ENCODE measurements at regions of chr12 and their contacts with region 1.

Region 1: GRCh38 chr12:64610149-64610678 is at the start of gene RASSF3:
- DNase-seq: peak; percentile 39 to 90 (median 78)
- ATAC-seq: peak; percentile 62
- H3K4me3 ChIP-seq: peak within 1 kb of the TSS; percentile 96
- H3K4me3 Mint-ChIP-seq: peak within 1 kb of the TSS; percentile 90
- H3K27ac ChIP-seq: peak within 1 kb of the TSS; percentile 58 to 82
- H3K27ac Mint-ChIP-seq: peak within 1 kb of the TSS; percentile 96
- H3K4me1 ChIP-seq: peaks cover 21% of the 10 kb centered on the region
- H3K4me1 Mint-ChIP-seq: peaks cover 34% of the 10 kb centered on the region
- H3K27me3 ChIP-seq: no peaks in the 10 kb centered on the region
- H3K27me3 Mint-ChIP-seq: no peaks in the 10 kb centered on the region
- CTCF ChIP-seq: no peak
- total RNA-seq, gene RASSF3: 109 to 118 TPM

Region 2: DNA sequence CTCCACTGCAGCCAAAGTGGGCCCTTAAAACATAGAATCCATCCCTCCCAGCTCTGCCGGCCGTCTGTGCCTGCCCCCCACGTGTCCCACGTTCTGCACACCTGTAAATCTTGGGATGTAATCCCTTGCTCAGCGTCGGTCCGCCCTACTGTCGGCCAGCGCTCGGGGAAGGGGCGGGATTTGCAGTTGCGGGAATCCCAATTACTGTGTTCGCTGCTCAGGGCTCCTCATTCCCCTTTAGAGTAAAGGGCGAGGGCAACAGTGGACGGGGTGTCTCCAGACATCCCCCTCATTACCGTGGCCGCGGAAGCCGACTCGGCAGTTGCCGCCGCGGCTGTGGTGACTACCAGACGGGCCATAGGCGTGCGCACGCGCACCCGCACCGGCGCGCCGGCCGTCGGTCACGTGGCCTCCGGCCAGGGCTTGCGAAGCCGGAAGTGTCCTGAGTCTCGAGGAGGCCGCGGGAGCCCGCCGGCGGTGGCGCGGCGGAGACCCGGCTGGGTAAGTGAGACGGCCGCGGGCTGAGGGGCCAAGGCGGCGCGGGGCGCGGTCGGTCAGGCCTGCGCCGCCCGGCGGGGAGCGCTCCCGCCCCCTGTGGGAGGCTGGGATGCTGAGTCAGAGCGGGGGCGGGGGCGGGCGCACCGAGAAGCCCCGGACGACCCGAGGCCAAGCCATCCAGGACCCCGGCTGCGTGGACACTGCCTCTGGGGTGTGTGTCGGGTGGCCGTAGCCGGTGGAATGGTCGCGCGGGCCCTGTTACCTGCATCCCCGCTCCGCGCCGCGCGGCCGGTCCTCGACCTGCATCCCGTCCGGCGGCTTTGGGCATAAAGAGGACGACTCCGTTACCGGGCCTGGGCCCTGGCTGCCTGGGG is 158.3 kb before region 1 on chr12 and contains the start of gene TBK1:
- CTCF ChIA-PET with region 1: no interaction called
- POLR2A ChIA-PET with region 1: no interaction called
- intact Hi-C with region 1: loop called in 1 of 2 experiments (anchors 5 kb)
- DNase-seq: peak; percentile 8 to 76 (median 51)
- ATAC-seq: peak; percentile 64
- H3K4me3 ChIP-seq: peak within 1 kb of the TSS; percentile 88 to 99
- H3K4me3 Mint-ChIP-seq: peak within 1 kb of the TSS; percentile 89
- H3K27ac ChIP-seq: peak within 1 kb of the TSS; percentile 76 to 93
- H3K27ac Mint-ChIP-seq: peak within 1 kb of the TSS; percentile 90
- H3K4me1 ChIP-seq: peaks cover 8% of the 10 kb centered on the region
- H3K4me1 Mint-ChIP-seq: peaks cover 40% of the 10 kb centered on the region
- H3K27me3 ChIP-seq: no peaks in the 10 kb centered on the region
- H3K27me3 Mint-ChIP-seq: no peaks in the 10 kb centered on the region
- CTCF ChIP-seq: no peak
- total RNA-seq, gene TBK1: 6.2 to 6.7 TPM

Region 3: GRCh38 chr12:64625243-64626077 is 15.2 kb after region 1 on chr12:
- CTCF ChIA-PET with region 1: interaction called, 4 read pairs
- POLR2A ChIA-PET with region 1: interaction called, 3 read pairs
- intact Hi-C with region 1: loop called (anchors 2 kb)
- DNase-seq: peak in 5 of 9 experiments; percentile 22 to 67 (median 44)
- ATAC-seq: peak; percentile 58
- H3K4me3 ChIP-seq: peak overlapping the region; percentile 19 to 25
- H3K4me3 Mint-ChIP-seq: peak overlapping the region; percentile 82
- H3K27ac ChIP-seq: peak overlapping the region in 1 of 2 experiments; percentile 48
- H3K27ac Mint-ChIP-seq: peak overlapping the region; percentile 84
- H3K4me1 ChIP-seq: peaks cover 73% of the 10 kb centered on the region
- H3K4me1 Mint-ChIP-seq: peaks cover 80% of the 10 kb centered on the region
- H3K27me3 ChIP-seq: no peaks in the 10 kb centered on the region
- H3K27me3 Mint-ChIP-seq: no peaks in the 10 kb centered on the region
- CTCF ChIP-seq: no peak

Region 4: GRCh38 chr12:64669270-64669842 is 59.1 kb after region 1 on chr12:
- CTCF ChIA-PET with region 1: interaction called, 7 read pairs
- POLR2A ChIA-PET with region 1: interaction called, 56 read pairs
- intact Hi-C with region 1: loop called (anchors 2 to 5 kb)
- DNase-seq: peak; percentile 18 to 94 (median 57)
- ATAC-seq: peak; percentile 79
- H3K4me3 ChIP-seq: peak overlapping the region; percentile 51 to 57
- H3K4me3 Mint-ChIP-seq: peak overlapping the region; percentile 87
- H3K27ac ChIP-seq: peak overlapping the region; percentile 77 to 94
- H3K27ac Mint-ChIP-seq: peak overlapping the region; percentile 98
- H3K4me1 ChIP-seq: peaks cover 92% of the 10 kb centered on the region
- H3K4me1 Mint-ChIP-seq: peaks cover 90% of the 10 kb centered on the region
- H3K27me3 ChIP-seq: no peaks in the 10 kb centered on the region
- H3K27me3 Mint-ChIP-seq: no peaks in the 10 kb centered on the region
- CTCF ChIP-seq: no peak

Region 5: GRCh38 chr12:64696080-64696741 is 86.0 kb after region 1 on chr12:
- CTCF ChIA-PET with region 1: interaction called, 27 read pairs
- POLR2A ChIA-PET with region 1: interaction called, 17 read pairs
- intact Hi-C with region 1: loop called (anchors 1 to 2 kb)
- DNase-seq: peak in 1 of 9 experiments; percentile 55
- ATAC-seq: no peak
- H3K4me3 ChIP-seq: no peak overlapping the region
- H3K4me3 Mint-ChIP-seq: peak overlapping the region; percentile 56
- H3K27ac ChIP-seq: peak overlapping the region in 1 of 2 experiments; percentile 36
- H3K27ac Mint-ChIP-seq: peak overlapping the region; percentile 91
- H3K4me1 ChIP-seq: peaks cover 79% of the 10 kb centered on the region
- H3K4me1 Mint-ChIP-seq: peaks cover 82% of the 10 kb centered on the region
- H3K27me3 ChIP-seq: no peaks in the 10 kb centered on the region
- H3K27me3 Mint-ChIP-seq: no peaks in the 10 kb centered on the region
- CTCF ChIP-seq: no peak

Region 6: DNA sequence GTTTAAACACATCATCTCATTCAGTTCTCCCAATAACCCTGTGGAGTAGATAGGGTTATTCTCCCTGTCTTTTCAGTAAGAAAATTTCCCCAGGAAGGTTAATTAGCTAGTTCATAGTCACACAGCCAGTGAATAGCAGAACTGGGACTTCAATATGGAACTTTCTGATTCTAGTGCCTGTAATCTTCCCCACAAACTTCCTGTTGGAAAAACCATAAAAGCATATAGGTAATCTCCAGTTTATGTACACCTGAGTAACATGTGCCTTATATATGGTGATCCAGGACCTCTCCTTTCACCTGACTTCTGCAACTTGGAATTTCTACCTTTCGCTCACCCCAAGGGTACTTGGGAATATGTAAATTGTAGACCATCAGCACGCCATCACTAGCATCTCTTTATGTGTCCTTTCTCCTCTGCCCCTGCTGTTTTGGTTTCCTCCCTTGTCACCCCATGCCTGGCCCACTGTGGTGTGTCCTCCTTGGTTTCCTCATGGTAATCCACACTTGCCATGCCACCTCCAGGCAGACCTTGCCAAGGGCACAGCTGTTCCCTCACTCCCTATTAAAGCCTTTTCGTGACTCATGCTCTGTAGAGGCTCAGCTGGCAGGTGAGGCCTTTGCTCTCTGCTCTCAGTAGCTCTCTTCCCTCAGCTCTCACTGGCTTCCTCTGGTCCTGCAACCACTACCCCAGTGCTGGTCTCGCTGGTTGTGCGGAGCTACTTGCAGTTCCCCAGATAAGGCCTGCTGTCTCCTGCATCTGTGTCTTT is 230.9 kb after region 1 on chr12:
- CTCF ChIA-PET with region 1: no interaction called
- POLR2A ChIA-PET with region 1: no interaction called
- intact Hi-C with region 1: no loop called
- DNase-seq: no peak
- ATAC-seq: no peak
- H3K4me3 ChIP-seq: no peak overlapping the region
- H3K4me3 Mint-ChIP-seq: no peak overlapping the region
- H3K27ac ChIP-seq: no peak overlapping the region
- H3K27ac Mint-ChIP-seq: no peak overlapping the region
- H3K4me1 ChIP-seq: no peaks in the 10 kb centered on the region
- H3K4me1 Mint-ChIP-seq: no peaks in the 10 kb centered on the region
- H3K27me3 ChIP-seq: no peaks in the 10 kb centered on the region
- H3K27me3 Mint-ChIP-seq: peaks cover 2% of the 10 kb centered on the region
- CTCF ChIP-seq: no peak

Region 7: GRCh38 chr12:65175385-65175784 is 565.2 kb after region 1 on chr12:
- CTCF ChIA-PET with region 1: no interaction called
- POLR2A ChIA-PET with region 1: no interaction called
- intact Hi-C with region 1: loop called (anchors 5 kb)
- DNase-seq: no peak
- ATAC-seq: no peak
- H3K4me3 ChIP-seq: no peak overlapping the region
- H3K4me3 Mint-ChIP-seq: no peak overlapping the region
- H3K27ac ChIP-seq: no peak overlapping the region
- H3K27ac Mint-ChIP-seq: no peak overlapping the region
- H3K4me1 ChIP-seq: peaks cover 47% of the 10 kb centered on the region
- H3K4me1 Mint-ChIP-seq: peaks cover 36% of the 10 kb centered on the region
- H3K27me3 ChIP-seq: no peaks in the 10 kb centered on the region
- H3K27me3 Mint-ChIP-seq: no peaks in the 10 kb centered on the region
- CTCF ChIP-seq: no peak

Measured in CD8-positive, alpha-beta T cell (primary cell).